IMR-90 (cell line): ENCODE measurements at regions of chr12 and their contacts with region 1.

Region 1: DNA sequence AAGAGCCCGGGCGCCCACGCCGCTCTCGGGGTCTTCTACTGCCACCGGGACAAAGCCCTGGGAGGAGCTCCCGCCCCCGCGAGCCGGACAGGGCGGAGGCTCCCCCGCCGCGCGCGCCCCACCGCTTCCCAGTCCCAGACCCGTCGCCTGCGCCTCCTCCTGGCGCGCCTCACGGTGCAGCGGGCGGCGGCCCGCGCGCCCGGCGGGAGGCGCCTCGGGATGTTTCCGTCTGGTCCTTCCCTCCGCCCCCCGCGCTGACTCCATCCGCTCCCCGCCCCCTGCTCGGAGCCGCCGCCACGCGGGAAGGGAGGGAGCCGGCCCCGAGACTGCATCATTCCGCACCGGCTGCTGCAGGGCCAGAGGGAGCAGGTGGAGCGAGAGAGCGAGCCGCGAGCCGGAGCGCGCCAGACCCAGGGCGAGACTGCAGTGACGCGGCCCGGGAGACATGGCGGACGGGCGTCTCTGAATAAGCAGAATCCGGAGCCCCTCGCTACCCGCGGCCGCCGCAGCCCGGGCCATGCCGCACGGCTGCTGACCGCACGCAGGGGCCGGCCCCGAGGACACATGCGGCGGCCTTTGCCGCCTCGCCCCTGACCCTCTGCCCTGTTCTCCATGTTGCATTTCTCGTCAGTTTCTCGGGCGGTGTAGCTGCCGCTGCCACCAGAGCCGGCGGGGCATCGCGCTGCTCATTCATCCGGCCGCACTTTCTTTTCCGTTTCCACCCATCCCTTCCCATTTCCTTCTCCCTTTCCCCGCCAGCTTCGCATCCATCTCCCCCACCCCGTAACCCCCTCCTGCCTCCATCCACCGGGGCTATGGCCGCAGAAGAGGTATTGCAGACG is at the start of gene BICD1:
- DNase-seq: peak; percentile 87
- ATAC-seq: peak; percentile 91
- H3K4me3 ChIP-seq: peak within 1 kb of the TSS; percentile 85
- H3K27ac ChIP-seq: peak within 1 kb of the TSS; percentile 91
- H3K4me1 ChIP-seq: peaks cover 4% of the 10 kb centered on the region
- H3K27me3 ChIP-seq: no peaks in the 10 kb centered on the region
- CTCF ChIP-seq: peak; percentile 58
- POLR2A ChIP-seq: peak; percentile 95
- RAD21 ChIP-seq: peak; percentile 27
- total RNA-seq, gene BICD1: 17.2 and 25.0 TPM in 2 replicates

Region 2: DNA sequence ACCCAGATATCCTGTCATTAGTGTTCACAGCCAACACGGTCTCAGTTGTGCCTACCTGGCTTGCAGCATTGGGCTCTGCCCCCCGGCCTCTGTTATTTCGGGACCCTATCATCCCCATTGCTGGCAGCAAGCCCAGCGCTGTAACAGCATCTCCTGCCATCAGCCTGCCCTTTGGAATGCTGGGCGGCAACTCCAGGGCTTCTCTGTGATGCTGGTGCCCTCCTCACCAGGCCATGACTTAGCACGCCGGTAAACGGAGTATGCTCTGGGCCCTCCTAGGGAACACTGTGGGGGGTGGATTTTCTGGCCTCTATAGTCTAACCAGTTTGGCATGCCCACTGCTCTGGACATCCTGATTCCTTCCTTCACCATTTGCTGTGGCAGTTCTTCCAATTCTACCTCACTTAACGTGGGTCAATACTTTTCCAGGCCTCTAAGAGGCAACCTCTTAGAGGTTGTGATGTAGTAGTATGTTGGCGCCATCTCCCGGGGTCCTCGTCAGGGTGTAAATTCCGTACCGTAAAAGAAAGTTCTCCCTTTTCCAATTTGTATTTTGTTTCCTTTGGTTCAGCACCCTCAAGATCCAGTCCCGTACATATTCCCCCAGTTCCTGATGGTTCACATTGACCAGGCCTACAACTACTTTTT is 860.8 kb before region 1 on chr12:
- CTCF ChIA-PET with region 1: no interaction called
- POLR2A ChIA-PET with region 1: no interaction called
- dilution Hi-C with region 1: no loop called
- in situ Hi-C with region 1: no loop called
- intact Hi-C with region 1: no loop called
- DNase-seq: no peak
- ATAC-seq: no peak
- H3K4me3 ChIP-seq: no peak overlapping the region
- H3K27ac ChIP-seq: no peak overlapping the region
- H3K4me1 ChIP-seq: no peaks in the 10 kb centered on the region
- H3K27me3 ChIP-seq: peaks cover 20% of the 10 kb centered on the region
- CTCF ChIP-seq: peak; percentile 13; the same call in 1 of the 2 replicates
- POLR2A ChIP-seq: no peak
- RAD21 ChIP-seq: no peak

Region 3: GRCh38 chr12:31651893-31652521 is 454.7 kb before region 1 on chr12:
- CTCF ChIA-PET with region 1: no interaction called
- POLR2A ChIA-PET with region 1: no interaction called
- dilution Hi-C with region 1: no loop called
- in situ Hi-C with region 1: no loop called
- intact Hi-C with region 1: loop called (anchors 2 kb)
- DNase-seq: no peak
- ATAC-seq: no peak
- H3K4me3 ChIP-seq: no peak overlapping the region
- H3K27ac ChIP-seq: no peak overlapping the region
- H3K4me1 ChIP-seq: peaks cover 2% of the 10 kb centered on the region; the same call in 1 of the 2 replicates
- H3K27me3 ChIP-seq: no peaks in the 10 kb centered on the region
- CTCF ChIP-seq: no peak
- POLR2A ChIP-seq: no peak
- RAD21 ChIP-seq: no peak

Region 4: DNA sequence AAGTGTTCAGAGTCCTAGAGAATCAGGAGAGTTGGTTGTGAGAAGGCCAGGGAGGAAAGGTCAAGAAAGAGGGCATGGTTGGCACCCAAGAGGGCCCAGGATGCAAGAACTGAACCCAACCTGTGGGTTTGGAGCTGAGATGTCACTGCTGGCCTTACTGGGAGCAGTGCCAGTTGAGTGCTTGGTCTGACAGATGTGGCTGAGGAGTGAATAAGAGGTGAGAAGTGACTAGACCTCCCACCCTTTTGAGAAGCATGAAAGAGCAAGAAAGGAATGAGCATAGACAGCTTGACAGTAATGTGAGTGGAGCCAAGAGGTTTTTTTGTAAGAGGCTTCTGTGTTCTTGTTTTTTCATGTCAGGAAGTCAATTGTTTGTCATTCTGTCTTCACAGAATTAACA is 387.9 kb after region 1 on chr12:
- CTCF ChIA-PET with region 1: no interaction called
- POLR2A ChIA-PET with region 1: no interaction called
- dilution Hi-C with region 1: no loop called
- in situ Hi-C with region 1: no loop called
- intact Hi-C with region 1: no loop called
- DNase-seq: no peak
- ATAC-seq: no peak
- H3K4me3 ChIP-seq: no peak overlapping the region
- H3K27ac ChIP-seq: no peak overlapping the region
- H3K4me1 ChIP-seq: no peaks in the 10 kb centered on the region
- H3K27me3 ChIP-seq: peaks cover 8% of the 10 kb centered on the region; the same call in 1 of the 2 replicates
- CTCF ChIP-seq: no peak
- POLR2A ChIP-seq: no peak
- RAD21 ChIP-seq: no peak

Region 5: GRCh38 chr12:32627976-32628375 is 521.2 kb after region 1 on chr12:
- CTCF ChIA-PET with region 1: no interaction called
- POLR2A ChIA-PET with region 1: no interaction called
- dilution Hi-C with region 1: no loop called
- in situ Hi-C with region 1: no loop called
- intact Hi-C with region 1: no loop called
- DNase-seq: no peak
- ATAC-seq: no peak
- H3K4me3 ChIP-seq: no peak overlapping the region
- H3K27ac ChIP-seq: no peak overlapping the region
- H3K4me1 ChIP-seq: no peaks in the 10 kb centered on the region
- H3K27me3 ChIP-seq: no peaks in the 10 kb centered on the region
- CTCF ChIP-seq: no peak
- POLR2A ChIP-seq: no peak
- RAD21 ChIP-seq: no peak